ENCODE measurements at regions of chr19 and their contacts with region 1.

Region 1: DNA sequence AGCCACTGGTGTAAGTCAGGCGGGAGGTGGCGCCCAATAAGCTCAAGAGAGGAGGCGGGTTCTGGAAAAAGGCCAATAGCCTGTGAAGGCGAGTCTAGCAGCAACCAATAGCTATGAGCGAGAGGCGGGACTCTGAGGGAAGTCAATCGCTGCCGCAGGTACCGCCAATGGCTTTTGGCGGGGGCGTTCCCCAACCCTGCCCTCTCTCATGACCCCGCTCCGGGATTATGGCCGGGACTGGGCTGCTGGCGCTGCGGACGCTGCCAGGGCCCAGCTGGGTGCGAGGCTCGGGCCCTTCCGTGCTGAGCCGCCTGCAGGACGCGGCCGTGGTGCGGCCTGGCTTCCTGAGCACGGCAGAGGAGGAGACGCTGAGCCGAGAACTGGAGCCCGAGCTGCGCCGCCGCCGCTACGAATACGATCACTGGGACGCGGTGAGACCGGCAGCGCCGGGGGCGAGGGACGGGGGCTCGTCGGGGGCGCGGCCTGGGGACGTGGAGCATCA is at the start of gene ALKBH7:
- DNase-seq: peak; percentile 94
- CTCF ChIP-seq: no peak

Region 2: GRCh38 chr19:6340493-6341201 is 32.0 kb before region 1 on chr19:
- CTCF ChIA-PET with region 1: no interaction called
- POLR2A ChIA-PET with region 1: no interaction called
- DNase-seq: no peak
- CTCF ChIP-seq: no peak

Region 3: DNA sequence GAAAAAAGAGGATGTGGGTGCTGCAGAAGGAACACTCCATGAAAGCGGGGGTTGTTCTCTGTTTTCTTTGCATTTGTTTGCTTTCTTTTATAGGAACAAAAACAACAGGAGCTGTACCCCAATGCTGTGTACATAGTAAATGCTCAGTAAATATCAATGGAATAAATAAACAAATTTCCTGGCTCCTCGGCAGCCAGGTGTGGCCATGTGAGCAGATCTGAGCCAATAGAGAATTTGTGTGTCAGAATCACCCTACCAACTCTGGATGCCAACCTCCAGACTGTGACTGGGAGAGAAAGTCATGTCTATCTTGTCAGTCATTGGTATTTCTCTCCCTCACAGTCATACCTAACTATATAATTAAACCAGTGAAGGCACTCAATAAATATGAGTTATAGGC is 22.0 kb before region 1 on chr19:
- CTCF ChIA-PET with region 1: no interaction called
- POLR2A ChIA-PET with region 1: no interaction called
- DNase-seq: no peak
- CTCF ChIP-seq: no peak

Region 4: DNA sequence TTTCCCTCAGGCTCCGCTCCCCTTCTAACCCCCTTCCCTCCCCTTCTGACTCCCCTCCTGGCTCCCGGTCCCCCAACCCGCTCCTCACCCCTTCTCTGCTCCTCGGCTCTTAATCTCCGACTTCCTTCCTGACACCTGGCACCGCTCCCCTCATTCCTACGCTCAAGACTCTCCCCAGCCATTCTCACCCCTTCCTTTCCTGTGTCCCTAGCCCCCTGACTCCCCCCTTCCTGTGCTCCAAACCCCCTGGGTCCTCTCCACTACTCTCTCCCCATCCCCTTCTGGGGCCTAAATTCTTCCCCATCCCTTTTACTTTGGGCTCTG is 10.7 kb before region 1 on chr19:
- CTCF ChIA-PET with region 1: interaction called, 4 read pairs
- POLR2A ChIA-PET with region 1: interaction called, 13 read pairs
- DNase-seq: no peak
- CTCF ChIP-seq: no peak

Region 5: GRCh38 chr19:6393074-6393983 is 20.7 kb after region 1 on chr19 and contains the start of gene GTF2F1:
- CTCF ChIA-PET with region 1: interaction called, 4 read pairs
- POLR2A ChIA-PET with region 1: interaction called, 10 read pairs
- DNase-seq: peak; percentile 98
- CTCF ChIP-seq: no peak

Region 6: GRCh38 chr19:6540918-6541689 is 168.5 kb after region 1 on chr19:
- CTCF ChIA-PET with region 1: no interaction called
- POLR2A ChIA-PET with region 1: interaction called, 12 read pairs
- DNase-seq: no peak
- CTCF ChIP-seq: no peak

Measured in GM10248 (cell line).